ENCODE measurements at regions of chr2 and their contacts with region 1.

Region 1: GRCh38 chr2:146927080-146927711 is 917.6 kb upstream of the ACVR2A start:
- DNase-seq: peak; percentile 39
- ATAC-seq: peak; percentile 92
- H3K4me3 ChIP-seq: no peak overlapping the region
- H3K27ac ChIP-seq: no peak overlapping the region
- H3K4me1 ChIP-seq: 0 out of 4 replicates have a peak, but pooled peaks cover 0 to 2% of the 10 kb centered on the region in 2 experiments
- H3K27me3 ChIP-seq: no peaks in the 10 kb centered on the region
- CTCF ChIP-seq: peak; percentile 33 to 64 (median 63); a peak in 5 of 6 replicates
- POLR2A ChIP-seq: no peak
- RAD21 ChIP-seq: peak; percentile 80

Region 2: GRCh38 chr2:146734042-146734820 is 193.0 kb before region 1 on chr2:
- CTCF ChIA-PET with region 1: interaction called, 3 read pairs
- POLR2A ChIA-PET with region 1: no interaction called
- RAD21 ChIA-PET with region 1: interaction called in 1 of 2 experiments, 4 read pairs
- intact Hi-C with region 1: loop called (anchors 2 kb)
- DNase-seq: peak; percentile 60
- ATAC-seq: peak; percentile 99
- H3K4me3 ChIP-seq: no peak overlapping the region
- H3K27ac ChIP-seq: no peak overlapping the region
- H3K4me1 ChIP-seq: no peaks in the 10 kb centered on the region
- H3K27me3 ChIP-seq: no peaks in the 10 kb centered on the region
- CTCF ChIP-seq: peak; percentile 44 to 75 (median 61); a peak in 4 of 6 replicates
- POLR2A ChIP-seq: no peak
- RAD21 ChIP-seq: peak; percentile 81

Region 3: DNA sequence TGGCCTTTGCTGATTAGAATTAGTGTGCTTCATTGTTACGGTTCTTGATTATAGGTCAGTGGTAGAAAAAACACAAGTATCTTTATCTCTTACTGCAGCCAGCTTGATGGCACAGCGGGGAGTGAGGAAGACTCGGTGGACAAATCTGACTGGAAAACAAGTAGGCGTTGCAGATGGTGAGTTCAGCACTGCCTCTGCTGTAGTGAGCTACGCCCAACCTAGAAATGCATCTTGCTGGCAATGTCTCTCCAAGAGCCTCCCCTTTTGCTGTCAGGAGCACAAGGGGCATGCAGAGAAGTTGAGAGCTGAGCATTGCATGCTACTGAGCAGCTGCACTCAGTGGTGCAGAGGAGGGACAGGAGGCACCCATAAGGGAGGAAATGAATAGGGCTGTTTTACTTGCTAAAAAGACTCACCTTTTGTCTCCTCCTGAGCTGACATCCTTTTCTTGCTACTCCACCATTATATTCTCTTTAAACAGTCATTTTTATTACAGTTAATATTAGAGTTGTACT is 59.7 kb before region 1 on chr2:
- CTCF ChIA-PET with region 1: no interaction called
- POLR2A ChIA-PET with region 1: no interaction called
- RAD21 ChIA-PET with region 1: no interaction called
- intact Hi-C with region 1: no loop called
- DNase-seq: no peak
- ATAC-seq: no peak
- H3K4me3 ChIP-seq: no peak overlapping the region
- H3K27ac ChIP-seq: no peak overlapping the region
- H3K4me1 ChIP-seq: no peaks in the 10 kb centered on the region
- H3K27me3 ChIP-seq: no peaks in the 10 kb centered on the region
- CTCF ChIP-seq: no peak
- POLR2A ChIP-seq: no peak
- RAD21 ChIP-seq: no peak

Region 4: GRCh38 chr2:146890491-146890890 is 36.7 kb before region 1 on chr2:
- CTCF ChIA-PET with region 1: no interaction called
- POLR2A ChIA-PET with region 1: no interaction called
- RAD21 ChIA-PET with region 1: no interaction called
- intact Hi-C with region 1: loop called (anchors 2 kb)
- DNase-seq: no peak
- ATAC-seq: no peak
- H3K4me3 ChIP-seq: no peak overlapping the region
- H3K27ac ChIP-seq: no peak overlapping the region
- H3K4me1 ChIP-seq: no peaks in the 10 kb centered on the region
- H3K27me3 ChIP-seq: no peaks in the 10 kb centered on the region
- CTCF ChIP-seq: no peak
- POLR2A ChIP-seq: no peak
- RAD21 ChIP-seq: no peak

Measured in HCT116 (cell line).